Activated CD4-positive, alpha-beta T cell treated with anti-CD3 and anti-CD28 coated beads, Interleukin-2, amount 10 ng/mL, durations not matched to agents 24 days and 14 days (primary cell): ENCODE measurements at regions of chr1 and their contacts with region 1.

Region 1: GRCh38 chr1:205729945-205730610 is 19.9 kb downstream of the NUCKS1 start:
- DNase-seq: no peak
- H3K4me3 Mint-ChIP-seq: no peak overlapping the region
- H3K27ac Mint-ChIP-seq: peak overlapping the region; percentile 70
- H3K4me1 Mint-ChIP-seq: peaks cover 25% of the 10 kb centered on the region
- H3K27me3 Mint-ChIP-seq: no peaks in the 10 kb centered on the region

Region 2: DNA sequence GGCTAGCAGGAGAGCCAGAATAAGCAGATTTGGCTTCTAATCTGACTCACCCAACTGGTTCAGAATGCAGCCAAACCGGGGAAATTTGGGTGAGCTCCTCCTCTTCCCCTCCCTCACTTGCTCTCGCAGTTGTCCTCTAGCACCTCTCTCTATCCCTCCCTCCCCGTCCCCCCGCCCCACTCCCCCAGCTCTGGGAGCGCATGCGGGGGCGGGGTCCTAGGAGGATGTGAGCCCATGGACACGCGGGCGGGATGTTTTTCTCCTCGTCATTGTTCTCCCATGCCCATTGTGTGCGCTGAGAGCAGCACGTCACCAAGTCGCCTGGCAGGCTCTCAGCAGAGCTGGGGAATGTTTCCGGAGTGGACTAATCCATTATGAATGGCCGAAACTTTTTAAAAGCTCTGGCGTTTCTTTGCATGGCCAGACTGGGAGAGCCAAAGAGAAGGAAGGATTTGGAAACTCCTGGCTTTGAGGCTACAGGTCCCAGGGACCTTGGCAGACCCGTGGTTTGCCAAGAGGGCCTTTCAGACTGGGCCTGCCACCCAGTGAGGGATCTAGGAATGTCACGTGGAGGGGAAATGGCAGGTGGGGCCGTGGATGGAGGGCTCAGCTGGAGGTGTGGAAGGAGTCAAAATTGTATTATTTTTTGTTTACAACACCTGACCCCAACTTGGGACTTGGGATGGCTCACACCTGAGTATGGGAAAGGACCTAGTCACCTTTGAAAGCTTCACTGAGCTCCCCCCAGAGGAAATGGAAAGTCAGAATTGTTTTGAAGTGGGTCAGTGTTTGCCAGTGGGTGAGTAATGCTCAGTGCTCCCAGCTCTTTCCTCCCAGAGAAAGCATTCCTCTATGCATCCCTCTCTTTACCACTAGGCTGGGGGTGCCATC is 186.4 kb before region 1 on chr1:
- intact Hi-C with region 1: no loop called
- DNase-seq: peak; percentile 75
- H3K4me3 Mint-ChIP-seq: peak overlapping the region; percentile 67
- H3K27ac Mint-ChIP-seq: no peak overlapping the region
- H3K4me1 Mint-ChIP-seq: peaks cover 10% of the 10 kb centered on the region
- H3K27me3 Mint-ChIP-seq: peaks cover 40% of the 10 kb centered on the region

Region 3: GRCh38 chr1:205743977-205744376 is 13.9 kb after region 1 on chr1:
- intact Hi-C with region 1: loop called (anchors 2 kb)
- DNase-seq: no peak
- H3K4me3 Mint-ChIP-seq: no peak overlapping the region
- H3K27ac Mint-ChIP-seq: no peak overlapping the region
- H3K4me1 Mint-ChIP-seq: peaks cover 36% of the 10 kb centered on the region
- H3K27me3 Mint-ChIP-seq: no peaks in the 10 kb centered on the region